ENCODE measurements at regions of chr1 and their contacts with region 1.

Region 1: GRCh38 chr1:9397997-9398526 is 105.4 kb downstream of the SPSB1 start:
- DNase-seq: no peak
- H3K27ac ChIP-seq: peak overlapping the region; percentile 54
- CTCF ChIP-seq: no peak

Region 2: DNA sequence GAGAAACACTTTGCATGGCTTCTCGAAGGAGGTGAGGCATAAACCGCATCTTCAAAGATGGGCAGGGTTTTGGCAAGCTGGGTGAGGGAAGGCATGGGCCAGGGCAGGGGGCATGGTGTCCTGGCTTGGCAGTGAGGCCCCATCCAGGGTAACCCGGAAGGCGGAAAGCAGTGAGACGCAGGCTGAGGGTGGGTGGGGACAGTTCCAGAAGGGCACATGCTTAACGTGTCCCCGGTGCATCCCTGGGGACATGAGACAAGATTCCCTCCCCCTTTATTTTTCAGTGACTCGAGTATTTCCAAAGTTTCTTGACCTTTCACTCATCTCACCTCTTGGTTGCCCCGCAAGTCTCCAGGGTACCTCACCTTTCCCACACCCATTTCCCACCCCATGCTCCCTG is 18.4 kb after region 1 on chr1:
- CTCF ChIA-PET with region 1: interaction called, 11 read pairs
- POLR2A ChIA-PET with region 1: no interaction called
- DNase-seq: no peak
- H3K27ac ChIP-seq: no peak overlapping the region
- CTCF ChIP-seq: no peak

Measured in RWPE1 (cell line).